Calu3 (cell line): ENCODE measurements at regions of chr3 and their contacts with region 1.

Region 1: GRCh38 chr3:89586256-89586655 is 478.8 kb downstream of the EPHA3 start:
- DNase-seq: no peak
- H3K4me3 Mint-ChIP-seq: no peak overlapping the region
- H3K27ac Mint-ChIP-seq: peak overlapping the region; percentile 54
- H3K4me1 Mint-ChIP-seq: peaks cover 22% of the 10 kb centered on the region
- H3K27me3 Mint-ChIP-seq: no peaks in the 10 kb centered on the region
- CTCF ChIP-seq: no peak

Region 2: GRCh38 chr3:89679686-89680085 is 93.4 kb after region 1 on chr3:
- CTCF ChIA-PET with region 1: no interaction called
- intact Hi-C with region 1: no loop called
- DNase-seq: no peak
- H3K4me3 Mint-ChIP-seq: no peak overlapping the region
- H3K27ac Mint-ChIP-seq: no peak overlapping the region
- H3K4me1 Mint-ChIP-seq: peaks cover 8% of the 10 kb centered on the region
- H3K27me3 Mint-ChIP-seq: no peaks in the 10 kb centered on the region
- CTCF ChIP-seq: no peak

Region 3: DNA sequence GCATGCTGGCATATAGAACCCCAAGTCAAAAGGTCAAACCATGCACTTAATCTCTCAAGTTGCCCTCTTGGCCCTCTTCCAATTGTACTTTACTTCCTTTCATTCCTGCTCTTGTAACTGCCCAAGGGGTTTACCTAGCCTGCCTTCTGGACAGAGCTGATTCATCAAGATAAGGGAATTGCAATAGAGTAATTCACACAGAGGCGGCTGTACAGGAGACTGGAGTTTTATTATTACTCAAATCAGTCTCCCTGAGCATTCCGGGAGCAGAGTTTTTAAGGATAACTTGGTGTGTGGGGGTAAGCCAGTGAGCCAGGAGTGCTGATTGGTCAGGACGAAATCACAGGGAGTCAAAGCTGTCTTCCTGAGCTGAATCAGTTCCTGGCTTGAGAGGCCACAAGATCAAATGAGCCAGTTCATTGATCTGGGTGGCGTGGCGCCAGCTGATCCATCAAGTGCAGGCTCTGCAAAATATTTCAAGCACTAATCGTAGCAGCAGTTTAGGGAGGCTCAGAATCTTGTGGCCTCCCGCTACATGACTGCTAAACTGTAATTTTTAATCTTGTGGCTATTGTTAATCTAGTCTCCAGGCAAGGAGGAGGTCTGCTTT is 111.2 kb after region 1 on chr3:
- CTCF ChIA-PET with region 1: no interaction called
- intact Hi-C with region 1: loop called (anchors 5 kb)
- DNase-seq: peak; percentile 69
- H3K4me3 Mint-ChIP-seq: peak overlapping the region; percentile 26
- H3K27ac Mint-ChIP-seq: peak overlapping the region; percentile 57
- H3K4me1 Mint-ChIP-seq: peaks cover 52% of the 10 kb centered on the region
- H3K27me3 Mint-ChIP-seq: no peaks in the 10 kb centered on the region
- CTCF ChIP-seq: no peak